Ascending aorta (tissue), 2 donors: ENCODE measurements at regions of chr7 and their contacts with region 1.

Region 1: GRCh38 chr7:139777948-139778841 is at the start of gene HIPK2:
- DNase-seq: peak; percentile 38 to 90
- H3K4me3 ChIP-seq: peak within 1 kb of the TSS; percentile 78 to 94
- H3K27ac ChIP-seq: peak within 1 kb of the TSS; percentile 94 to 96
- H3K4me1 ChIP-seq: peaks cover 0 to 27% of the 10 kb centered on the region in 2 donors
- H3K27me3 ChIP-seq: no peaks in the 10 kb centered on the region
- CTCF ChIP-seq: no peak
- total RNA-seq, gene HIPK2: 53.9 TPM

Region 2: DNA sequence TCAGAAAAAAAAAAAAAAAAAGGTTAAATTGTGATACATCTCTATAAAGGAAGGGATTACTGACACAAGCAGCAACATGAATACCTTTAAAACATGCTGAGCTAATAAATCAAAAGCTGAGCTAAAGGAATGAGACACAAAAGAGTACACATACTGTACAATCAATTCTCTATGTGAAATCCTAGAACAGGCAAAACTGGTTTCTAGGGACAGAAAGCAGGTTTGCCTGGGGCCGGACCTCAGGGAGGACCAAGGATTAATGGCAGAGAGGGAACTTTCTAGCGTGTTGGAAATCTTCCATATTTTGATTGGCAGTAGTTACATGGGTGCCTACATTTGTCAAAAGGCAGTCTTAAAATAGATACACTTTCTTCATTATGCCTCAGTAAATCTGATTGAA is 347.2 kb before region 1 on chr7:
- intact Hi-C with region 1: loop called (anchors 5 kb)
- DNase-seq: no peak
- H3K4me3 ChIP-seq: no peak overlapping the region
- H3K27ac ChIP-seq: peak overlapping the region; percentile 93 to 94
- H3K4me1 ChIP-seq: peaks cover 16 to 39% of the 10 kb centered on the region in 2 donors
- H3K27me3 ChIP-seq: no peaks in the 10 kb centered on the region
- CTCF ChIP-seq: no peak

Region 3: GRCh38 chr7:139645572-139646523 is 132.3 kb before region 1 on chr7:
- intact Hi-C with region 1: loop called (anchors 1 kb)
- DNase-seq: peak; percentile 50 to 91
- H3K4me3 ChIP-seq: no peak overlapping the region
- H3K27ac ChIP-seq: peak overlapping the region; percentile 37 to 70
- H3K4me1 ChIP-seq: peaks cover 0 to 6% of the 10 kb centered on the region in 2 donors
- H3K27me3 ChIP-seq: no peaks in the 10 kb centered on the region
- CTCF ChIP-seq: peak; percentile 88 to 94 (median 90)

Region 4: GRCh38 chr7:139680676-139681462 is 97.3 kb before region 1 on chr7:
- intact Hi-C with region 1: loop called (anchors 1 kb)
- DNase-seq: peak; percentile 87 to 94
- H3K4me3 ChIP-seq: no peak overlapping the region
- H3K27ac ChIP-seq: peak overlapping the region; percentile 86 to 93
- H3K4me1 ChIP-seq: peaks cover 11 to 47% of the 10 kb centered on the region in 2 donors
- H3K27me3 ChIP-seq: no peaks in the 10 kb centered on the region
- CTCF ChIP-seq: no peak

Region 5: DNA sequence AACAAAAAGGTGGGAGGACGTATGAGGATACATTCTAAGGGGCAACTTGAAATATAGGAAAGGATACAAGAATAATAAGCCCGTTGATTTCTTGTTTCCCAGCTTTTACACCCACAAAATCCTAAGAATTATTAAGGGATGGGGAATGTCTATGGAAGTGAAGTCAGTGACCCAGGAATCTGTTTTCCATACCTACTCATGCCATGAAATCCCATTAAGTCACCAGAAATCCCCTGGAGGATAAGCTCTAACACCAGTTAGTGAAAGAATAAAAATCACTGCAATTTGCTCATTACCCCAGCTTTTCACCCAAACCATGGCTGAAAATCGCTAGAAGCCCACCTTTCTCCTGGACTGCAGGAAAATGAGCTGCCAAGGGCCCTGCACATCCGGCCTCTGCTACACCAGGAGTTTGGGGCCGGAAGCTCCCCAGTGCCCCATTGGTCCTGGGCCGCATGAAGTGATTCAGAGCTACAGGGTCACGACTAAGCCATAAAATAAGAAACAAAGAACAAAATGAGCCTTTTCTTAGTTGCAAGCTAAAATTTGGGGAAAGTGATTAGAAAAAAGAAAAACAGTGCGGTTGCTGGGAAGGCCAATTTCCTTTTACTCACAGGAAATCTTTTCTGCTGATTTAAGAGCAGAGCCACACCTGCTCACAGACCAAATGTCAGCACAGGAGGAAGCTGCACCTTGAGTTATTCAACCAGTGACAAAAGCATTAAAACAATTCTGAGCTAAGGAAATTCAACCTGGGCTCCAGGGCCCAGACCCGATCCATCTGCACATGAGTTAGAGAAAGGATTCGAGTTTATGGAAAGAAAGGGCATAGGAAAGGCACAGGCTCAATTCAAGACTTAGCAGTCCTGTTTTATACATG is 40.7 kb before region 1 on chr7:
- intact Hi-C with region 1: loop called (anchors 2 kb)
- DNase-seq: no peak
- H3K4me3 ChIP-seq: no peak overlapping the region
- H3K27ac ChIP-seq: peak overlapping the region; percentile 82 to 96
- H3K4me1 ChIP-seq: peaks cover 35 to 77% of the 10 kb centered on the region in 2 donors
- H3K27me3 ChIP-seq: no peaks in the 10 kb centered on the region
- CTCF ChIP-seq: no peak

Region 6: GRCh38 chr7:140003913-140004382 is 225.8 kb after region 1 on chr7:
- intact Hi-C with region 1: loop called (anchors 2 kb)
- DNase-seq: no peak
- H3K4me3 ChIP-seq: no peak overlapping the region
- H3K27ac ChIP-seq: no peak overlapping the region
- H3K4me1 ChIP-seq: no peaks in the 10 kb centered on the region
- H3K27me3 ChIP-seq: no peaks in the 10 kb centered on the region
- CTCF ChIP-seq: peak; percentile 18 to 41 (median 21)

Region 7: GRCh38 chr7:140062528-140063299 is 284.5 kb after region 1 on chr7 and contains the start of gene PARP12:
- intact Hi-C with region 1: loop called (anchors 5 kb)
- DNase-seq: peak in 1 of 2 donors; percentile 89
- H3K4me3 ChIP-seq: peak within 1 kb of the TSS; percentile 87 to 89
- H3K27ac ChIP-seq: peak within 1 kb of the TSS; percentile 91 to 92
- H3K4me1 ChIP-seq: peaks cover 0 to 23% of the 10 kb centered on the region in 2 donors
- H3K27me3 ChIP-seq: no peaks in the 10 kb centered on the region
- CTCF ChIP-seq: peak in 1 of 3 experiments; percentile 7
- total RNA-seq, gene PARP12: 54.6 TPM